ENCODE measurements at regions of chr5 and their contacts with region 1.

Region 1: DNA sequence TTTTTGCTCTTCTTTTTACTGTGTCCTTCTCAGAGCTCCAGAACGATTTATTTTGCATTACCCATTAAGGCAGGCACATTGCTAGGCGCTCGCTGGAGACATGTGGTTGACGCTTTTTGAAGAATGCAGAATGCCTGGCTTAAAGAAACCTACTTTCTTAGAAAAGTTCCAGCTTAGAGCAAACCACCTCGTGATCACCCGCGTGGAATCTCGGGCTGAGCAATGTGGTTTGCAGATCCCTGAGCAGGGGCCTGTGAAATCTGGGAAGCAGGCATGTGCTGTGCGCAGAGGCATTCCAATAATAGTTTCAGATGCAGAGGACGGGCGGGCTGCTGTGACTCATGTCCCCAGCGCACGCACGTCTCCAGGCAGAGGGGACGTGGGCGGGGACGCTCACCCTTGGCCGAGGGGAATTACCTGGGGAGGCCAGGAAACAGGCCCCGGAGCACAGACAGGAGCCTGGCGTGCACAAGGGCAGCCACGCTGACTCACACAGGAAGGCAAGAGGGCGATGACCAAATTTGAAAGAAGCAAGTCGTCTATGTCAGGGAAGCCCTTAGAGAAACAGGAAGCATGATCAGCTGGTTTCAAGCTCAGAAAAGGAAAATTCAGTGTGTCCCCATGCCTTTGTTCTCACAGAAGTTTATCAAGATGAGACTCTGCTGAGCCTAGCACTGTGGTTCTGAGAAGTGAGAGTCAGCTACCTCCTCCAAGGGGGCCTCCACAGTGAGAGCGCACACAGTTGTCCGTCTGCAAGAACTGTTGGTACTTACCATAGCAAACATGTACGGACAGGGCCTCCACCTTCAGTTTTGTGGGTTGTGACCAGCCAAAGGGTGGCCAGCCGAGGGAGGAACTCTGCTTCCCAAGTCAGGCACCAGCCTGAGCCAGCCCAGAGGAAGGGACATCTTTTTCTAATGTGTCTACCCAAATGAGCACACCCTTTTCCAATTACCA is 218.6 kb downstream of the PIK3R1 start:
- DNase-seq: peak; percentile 93
- H3K4me3 ChIP-seq: no peak overlapping the region
- H3K27ac ChIP-seq: peak overlapping the region; percentile 75
- H3K4me1 ChIP-seq: peaks cover 15% of the 10 kb centered on the region
- H3K27me3 ChIP-seq: no peaks in the 10 kb centered on the region
- CTCF ChIP-seq: no peak
- POLR2A ChIP-seq: no peak

Region 2: GRCh38 chr5:68446487-68446894 is 12.3 kb after region 1 on chr5:
- CTCF ChIA-PET with region 1: interaction called, 3 read pairs
- POLR2A ChIA-PET with region 1: no interaction called
- dilution Hi-C with region 1: no loop called
- intact Hi-C with region 1: loop called (anchors 1 kb)
- DNase-seq: no peak
- H3K4me3 ChIP-seq: no peak overlapping the region
- H3K27ac ChIP-seq: no peak overlapping the region
- H3K4me1 ChIP-seq: peaks cover 16% of the 10 kb centered on the region
- H3K27me3 ChIP-seq: no peaks in the 10 kb centered on the region
- CTCF ChIP-seq: no peak
- POLR2A ChIP-seq: no peak

Region 3: GRCh38 chr5:68534131-68534940 is 100.1 kb after region 1 on chr5:
- CTCF ChIA-PET with region 1: no interaction called
- POLR2A ChIA-PET with region 1: no interaction called
- dilution Hi-C with region 1: no loop called
- intact Hi-C with region 1: no loop called
- DNase-seq: no peak
- H3K4me3 ChIP-seq: no peak overlapping the region
- H3K27ac ChIP-seq: no peak overlapping the region
- H3K4me1 ChIP-seq: peaks cover 8% of the 10 kb centered on the region
- H3K27me3 ChIP-seq: peaks cover 8 to 16% of the 10 kb centered on the region in 2 experiments
- CTCF ChIP-seq: no peak
- POLR2A ChIP-seq: no peak

Region 4: GRCh38 chr5:68725905-68726683 is 291.9 kb after region 1 on chr5:
- CTCF ChIA-PET with region 1: no interaction called
- POLR2A ChIA-PET with region 1: no interaction called
- dilution Hi-C with region 1: no loop called
- intact Hi-C with region 1: no loop called
- DNase-seq: no peak
- H3K4me3 ChIP-seq: no peak overlapping the region
- H3K27ac ChIP-seq: no peak overlapping the region
- H3K4me1 ChIP-seq: no peaks in the 10 kb centered on the region
- H3K27me3 ChIP-seq: peaks cover 0 to 2% of the 10 kb centered on the region in 2 experiments
- CTCF ChIP-seq: no peak
- POLR2A ChIP-seq: no peak

Region 5: DNA sequence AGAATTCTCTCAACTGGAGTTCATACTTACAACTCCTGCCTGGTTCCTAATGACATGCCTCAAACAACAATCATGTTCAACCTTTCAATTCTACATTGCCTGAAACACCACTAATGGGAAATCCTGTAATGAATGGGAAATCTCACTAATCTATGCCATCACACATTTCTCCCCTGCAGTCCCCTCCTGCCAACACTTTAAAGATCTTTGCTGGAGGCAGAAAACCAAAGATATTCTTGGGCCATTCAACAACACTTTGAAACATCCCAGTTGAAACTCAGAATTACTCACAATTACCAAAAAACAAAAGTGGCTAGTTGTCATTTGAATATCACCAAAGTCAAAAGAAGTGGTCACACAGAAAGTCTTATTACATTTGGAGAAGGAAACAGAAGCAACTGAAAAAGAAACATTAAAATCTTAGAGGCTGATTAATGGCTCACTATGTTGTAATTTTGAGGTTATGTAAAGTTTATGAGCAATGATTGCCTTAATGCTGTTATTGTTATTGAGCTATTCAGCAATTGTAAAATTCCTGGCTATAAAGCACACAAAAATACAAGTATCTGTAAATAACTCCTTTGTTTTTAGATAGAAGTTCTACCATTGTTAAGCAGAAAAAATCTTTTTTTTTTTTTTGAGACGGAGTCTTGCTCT is 346.2 kb after region 1 on chr5:
- CTCF ChIA-PET with region 1: no interaction called
- POLR2A ChIA-PET with region 1: no interaction called
- dilution Hi-C with region 1: no loop called
- intact Hi-C with region 1: no loop called
- DNase-seq: no peak
- H3K4me3 ChIP-seq: no peak overlapping the region
- H3K27ac ChIP-seq: no peak overlapping the region
- H3K4me1 ChIP-seq: no peaks in the 10 kb centered on the region
- H3K27me3 ChIP-seq: no peaks in the 10 kb centered on the region
- CTCF ChIP-seq: no peak
- POLR2A ChIP-seq: no peak